CD8-positive, alpha-beta T cell (primary cell): ENCODE measurements at regions of chrX and their contacts with region 1.

Region 1: DNA sequence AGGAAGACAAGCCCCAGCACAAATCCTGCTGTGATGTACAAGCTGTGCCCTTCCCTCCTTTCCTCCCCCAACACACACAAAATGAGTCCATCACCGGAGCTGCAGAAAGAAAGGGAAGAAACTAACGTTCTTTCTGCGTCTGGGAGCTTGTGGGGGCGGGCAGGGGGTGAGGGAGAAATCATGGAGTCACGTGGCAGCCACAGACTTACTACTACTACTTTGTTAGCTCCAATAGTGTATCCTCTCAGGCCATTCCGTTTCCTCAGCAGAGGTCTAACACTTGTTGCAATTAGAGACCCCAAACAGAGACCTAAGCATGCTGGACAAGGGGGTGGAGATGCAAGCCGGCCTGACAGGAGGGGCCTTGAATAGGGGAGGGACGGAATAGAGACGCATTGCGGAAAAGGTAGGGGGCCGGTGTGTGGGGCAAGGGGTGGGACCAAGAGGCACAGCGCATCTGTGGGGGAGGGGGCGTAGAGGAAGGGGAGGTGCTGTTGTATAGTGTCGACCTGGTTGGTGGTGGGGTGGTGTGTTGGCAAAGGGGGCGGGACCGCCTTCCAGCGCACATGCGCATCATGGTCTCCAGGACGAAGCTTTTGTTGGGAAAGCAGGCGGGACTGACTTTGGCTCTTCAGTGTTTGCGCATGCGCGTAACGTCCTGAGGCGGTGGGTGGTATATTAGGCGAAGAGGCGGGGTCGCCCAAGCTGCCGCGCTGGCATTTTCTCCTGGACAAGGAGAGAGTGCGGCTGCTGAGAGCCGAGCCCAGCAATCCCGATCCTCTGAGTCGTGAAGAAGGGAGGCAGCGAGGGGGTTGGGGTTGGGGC is at the start of gene MAGED1:
- DNase-seq: peak; percentile 47 to 87 (median 71)
- ATAC-seq: peak; percentile 87
- H3K4me3 ChIP-seq: peak within 1 kb of the TSS; percentile 56 to 68
- H3K4me3 Mint-ChIP-seq: peak within 1 kb of the TSS; percentile 93
- H3K27ac ChIP-seq: peak within 1 kb of the TSS; percentile 30 to 46
- H3K27ac Mint-ChIP-seq: peak within 1 kb of the TSS; percentile 92
- H3K4me1 ChIP-seq: peaks cover 12% of the 10 kb centered on the region
- H3K4me1 Mint-ChIP-seq: peaks cover 34% of the 10 kb centered on the region
- H3K27me3 ChIP-seq: no peaks in the 10 kb centered on the region
- H3K27me3 Mint-ChIP-seq: no peaks in the 10 kb centered on the region
- CTCF ChIP-seq: no peak
- total RNA-seq, gene MAGED1: 30.2 to 30.4 TPM

Region 2: GRCh38 chrX:51395810-51396728 is 497.1 kb before region 1 on chrX:
- CTCF ChIA-PET with region 1: no interaction called
- POLR2A ChIA-PET with region 1: no interaction called
- intact Hi-C with region 1: loop called in 1 of 2 experiments (anchors 5 kb)
- DNase-seq: peak; percentile 35 to 84 (median 59)
- ATAC-seq: peak; percentile 91
- H3K4me3 ChIP-seq: peak overlapping the region; percentile 62 to 85
- H3K4me3 Mint-ChIP-seq: peak overlapping the region; percentile 95
- H3K27ac ChIP-seq: peak overlapping the region; percentile 58 to 72
- H3K27ac Mint-ChIP-seq: peak overlapping the region; percentile 95
- H3K4me1 ChIP-seq: peaks cover 27% of the 10 kb centered on the region
- H3K4me1 Mint-ChIP-seq: peaks cover 64% of the 10 kb centered on the region
- H3K27me3 ChIP-seq: no peaks in the 10 kb centered on the region
- H3K27me3 Mint-ChIP-seq: no peaks in the 10 kb centered on the region
- CTCF ChIP-seq: peak; percentile 0

Region 3: GRCh38 chrX:51955200-51955599 is 62.1 kb after region 1 on chrX:
- CTCF ChIA-PET with region 1: no interaction called
- POLR2A ChIA-PET with region 1: no interaction called
- intact Hi-C with region 1: no loop called
- DNase-seq: no peak
- ATAC-seq: no peak
- H3K4me3 ChIP-seq: no peak overlapping the region
- H3K4me3 Mint-ChIP-seq: no peak overlapping the region
- H3K27ac ChIP-seq: no peak overlapping the region
- H3K27ac Mint-ChIP-seq: no peak overlapping the region
- H3K4me1 ChIP-seq: no peaks in the 10 kb centered on the region
- H3K4me1 Mint-ChIP-seq: no peaks in the 10 kb centered on the region
- H3K27me3 ChIP-seq: no peaks in the 10 kb centered on the region
- H3K27me3 Mint-ChIP-seq: peaks cover 2% of the 10 kb centered on the region
- CTCF ChIP-seq: no peak